Activated T-helper 1 cell treated with anti-CD3 and anti-CD28 coated beads, Interleukin-12 subunit alpha, Interleukin-12 subunit beta, Interleukin-2, Interleukin-4 antibody, amounts not matched to agents 30 ng/mL and 10 ng/mL and 1 ng/mL, durations not matched to agents 14 hours and 24 hours and 36 hours (primary cell): ENCODE measurements at regions of chr3 and their contacts with region 1.

Region 1: GRCh38 chr3:48446425-48447193 is at the start of gene ATRIP:
- DNase-seq: peak; percentile 88
- H3K4me3 Mint-ChIP-seq: peak within 1 kb of the TSS; percentile 90
- H3K27ac Mint-ChIP-seq: peak within 1 kb of the TSS; percentile 62
- H3K4me1 Mint-ChIP-seq: peaks cover 39% of the 10 kb centered on the region
- H3K27me3 Mint-ChIP-seq: no peaks in the 10 kb centered on the region
- total RNA-seq, gene ATRIP: 16.5 and 20.5 TPM in 2 replicates

Region 2: DNA sequence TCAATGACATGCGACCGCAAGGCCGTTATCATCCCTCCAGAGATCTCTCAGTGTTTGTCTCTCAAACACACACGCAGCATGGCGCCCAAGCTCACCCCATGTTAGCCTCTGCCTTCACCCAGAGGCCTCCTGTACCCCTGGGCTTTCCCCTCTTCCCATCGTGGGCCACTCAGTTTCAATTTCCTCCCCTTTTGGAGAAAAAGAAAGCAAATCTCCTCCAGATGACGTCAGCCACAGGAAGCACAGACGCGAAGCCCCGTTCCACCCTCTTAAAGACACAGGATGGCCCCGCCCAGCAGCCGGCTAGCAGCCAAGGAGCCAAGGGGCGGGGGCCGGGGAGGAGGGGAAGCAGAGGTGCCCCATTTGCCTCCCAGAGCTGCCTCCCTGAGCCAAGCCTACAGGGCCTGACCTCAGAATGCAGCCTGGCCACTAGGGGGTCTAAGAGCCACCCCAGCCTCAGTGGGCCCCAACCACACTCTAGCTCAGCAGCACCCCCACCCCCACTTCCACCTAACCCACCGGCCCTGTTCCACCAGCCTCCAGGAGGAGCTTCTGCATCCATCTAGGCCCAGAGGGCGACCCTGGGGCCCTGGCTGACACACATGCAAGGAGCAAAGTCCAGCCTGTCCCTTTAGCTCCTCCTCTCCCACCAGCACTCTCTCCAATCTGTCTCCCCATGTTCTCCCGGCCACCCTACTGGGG is 26.5 kb after region 1 on chr3:
- intact Hi-C with region 1: loop called (anchors 1 kb)
- DNase-seq: peak; percentile 94
- H3K4me3 Mint-ChIP-seq: peak overlapping the region; percentile 82
- H3K27ac Mint-ChIP-seq: peak overlapping the region; percentile 95
- H3K4me1 Mint-ChIP-seq: peaks cover 64% of the 10 kb centered on the region
- H3K27me3 Mint-ChIP-seq: no peaks in the 10 kb centered on the region